Transverse colon (tissue), 4 donors: ENCODE measurements at regions of chr22 and their contacts with region 1.

Region 1: GRCh38 chr22:38861170-38861876 is 10.7 kb downstream of the CBX6 start:
- DNase-seq: no peak
- H3K4me3 ChIP-seq: no peak overlapping the region
- H3K27ac ChIP-seq: no peak overlapping the region
- H3K4me1 ChIP-seq: peaks cover 18 to 32% (median 28%) of the 10 kb centered on the region in 4 donors
- H3K27me3 ChIP-seq: no peaks in the 10 kb centered on the region
- CTCF ChIP-seq: no peak
- EP300 ChIP-seq: no peak
- POLR2A ChIP-seq: no peak

Region 2: DNA sequence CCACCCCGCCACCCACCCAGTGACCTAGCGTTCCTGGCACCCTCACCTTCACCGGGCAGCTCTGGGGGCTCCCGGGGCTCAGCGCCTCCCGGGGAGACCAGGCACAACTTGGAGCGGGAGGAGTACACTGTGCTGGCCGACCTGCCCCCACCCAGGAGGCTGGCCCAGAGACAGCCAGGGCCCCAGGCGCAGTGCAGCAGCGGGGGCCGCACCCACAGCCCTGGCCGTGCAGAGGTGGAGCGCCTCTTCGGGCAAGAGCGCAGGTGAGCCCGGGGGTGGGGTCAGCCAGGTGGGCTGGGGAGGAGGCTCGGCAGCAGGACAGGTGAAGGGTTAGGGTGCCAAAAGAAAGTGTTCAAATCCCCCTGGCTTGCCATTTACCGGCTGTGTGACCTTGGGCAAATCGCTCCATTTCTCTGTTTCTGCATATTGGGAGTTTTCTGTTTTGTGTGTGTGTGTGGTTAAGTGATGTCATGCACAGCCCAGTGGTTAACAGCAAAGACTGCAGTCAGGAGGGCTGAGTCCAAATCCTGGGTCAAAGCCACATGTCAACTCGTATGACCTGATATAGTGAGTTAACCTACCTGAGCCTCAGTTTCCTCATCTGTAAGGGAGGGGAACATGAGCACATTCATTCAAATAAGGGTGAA is 1135.0 kb before region 1 on chr22:
- in situ Hi-C with region 1: no loop called
- intact Hi-C with region 1: no loop called
- DNase-seq: no peak
- H3K4me3 ChIP-seq: no peak overlapping the region
- H3K27ac ChIP-seq: no peak overlapping the region
- H3K4me1 ChIP-seq: peaks cover 0 to 23% (median 13%) of the 10 kb centered on the region in 4 donors
- H3K27me3 ChIP-seq: no peaks in the 10 kb centered on the region
- CTCF ChIP-seq: peak in 1 of 5 experiments; percentile 27
- EP300 ChIP-seq: no peak
- POLR2A ChIP-seq: no peak

Region 3: GRCh38 chr22:38817196-38817595 is 44.1 kb before region 1 on chr22:
- in situ Hi-C with region 1: no loop called
- intact Hi-C with region 1: loop called (anchors 1 kb)
- DNase-seq: no peak
- H3K4me3 ChIP-seq: no peak overlapping the region
- H3K27ac ChIP-seq: no peak overlapping the region
- H3K4me1 ChIP-seq: no peaks in the 10 kb centered on the region
- H3K27me3 ChIP-seq: no peaks in the 10 kb centered on the region
- CTCF ChIP-seq: no peak
- EP300 ChIP-seq: no peak
- POLR2A ChIP-seq: no peak